ENCODE measurements at regions of chr20 and their contacts with region 1.

Region 1: DNA sequence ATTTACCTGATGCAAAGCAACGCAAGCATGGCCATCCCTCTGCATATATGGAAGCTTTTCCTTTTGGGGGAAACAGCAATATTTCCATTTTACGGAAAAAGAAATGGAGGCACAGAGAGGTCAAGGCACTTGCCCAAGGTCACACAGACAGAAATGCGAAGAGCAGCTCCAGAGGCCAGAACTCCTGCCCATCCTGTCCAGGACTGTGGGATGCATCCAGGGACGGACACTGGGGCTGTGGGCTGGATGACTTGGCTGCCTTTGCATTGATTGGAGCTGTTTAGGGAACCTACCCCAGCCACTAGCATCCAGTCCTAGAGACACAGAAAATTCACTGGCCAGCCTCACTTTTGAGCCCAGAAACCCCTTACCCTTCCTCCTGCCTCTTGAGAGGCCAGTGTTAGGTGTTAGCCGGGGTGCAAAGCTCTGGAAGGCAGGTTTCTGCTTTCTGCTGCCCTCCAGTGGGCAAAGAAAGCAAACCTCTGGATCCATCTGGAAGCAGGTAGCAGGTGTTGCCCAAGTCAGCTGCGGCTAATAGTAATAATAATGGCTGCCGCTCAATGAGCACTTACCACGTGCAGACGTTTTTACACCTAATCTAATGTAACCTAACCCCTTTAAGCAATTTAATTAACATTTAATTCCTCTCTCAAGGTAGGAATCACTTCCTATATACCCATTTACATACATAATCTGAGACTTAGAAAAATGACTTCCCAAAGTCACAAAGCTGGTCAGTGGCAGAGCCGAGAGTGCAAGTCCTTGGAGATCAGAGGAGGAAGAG is 31.7 kb upstream of the CCN5 start:
- DNase-seq: no peak
- ATAC-seq: peak; percentile 87
- H3K4me3 ChIP-seq: no peak overlapping the region
- H3K27ac ChIP-seq: no peak overlapping the region
- H3K4me1 ChIP-seq: no peaks in the 10 kb centered on the region
- H3K27me3 ChIP-seq: no peaks in the 10 kb centered on the region
- CTCF ChIP-seq: peak; percentile 70

Region 2: DNA sequence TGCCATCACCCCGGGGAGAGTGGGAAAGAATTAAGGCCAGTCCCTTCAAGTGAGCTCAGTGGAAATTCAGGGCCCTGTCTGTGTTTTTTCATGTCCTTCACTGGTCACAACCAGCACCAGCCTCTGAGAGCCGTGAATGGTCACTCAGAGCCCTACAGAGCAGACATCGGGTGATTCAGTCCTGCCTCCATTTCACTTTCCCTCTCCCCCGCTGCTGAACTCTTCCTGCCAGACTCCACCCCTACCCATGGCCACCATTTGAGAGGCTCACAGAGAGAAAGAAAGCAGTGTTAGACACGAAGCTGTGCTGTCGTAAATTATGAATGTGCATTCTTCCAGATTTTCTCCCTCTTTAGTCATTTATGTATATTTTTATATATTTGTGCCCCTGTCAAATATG is 341.2 kb before region 1 on chr20:
- intact Hi-C with region 1: no loop called
- DNase-seq: peak; percentile 23
- ATAC-seq: no peak
- H3K4me3 ChIP-seq: no peak overlapping the region
- H3K27ac ChIP-seq: no peak overlapping the region
- H3K4me1 ChIP-seq: no peaks in the 10 kb centered on the region
- H3K27me3 ChIP-seq: peaks cover 9% of the 10 kb centered on the region
- CTCF ChIP-seq: no peak

Region 3: GRCh38 chr20:44733341-44734069 is 50.0 kb after region 1 on chr20:
- intact Hi-C with region 1: loop called (anchors 5 kb)
- DNase-seq: peak; percentile 79
- ATAC-seq: peak; percentile 74
- H3K4me3 ChIP-seq: no peak overlapping the region
- H3K27ac ChIP-seq: no peak overlapping the region
- H3K4me1 ChIP-seq: peaks cover 10% of the 10 kb centered on the region
- H3K27me3 ChIP-seq: no peaks in the 10 kb centered on the region
- CTCF ChIP-seq: peak; percentile 92

Region 4: GRCh38 chr20:44861531-44862006 is 178.1 kb after region 1 on chr20:
- intact Hi-C with region 1: loop called (anchors 10 kb)
- DNase-seq: no peak
- ATAC-seq: peak; percentile 14
- H3K4me3 ChIP-seq: no peak overlapping the region
- H3K27ac ChIP-seq: no peak overlapping the region
- H3K4me1 ChIP-seq: no peaks in the 10 kb centered on the region
- H3K27me3 ChIP-seq: no peaks in the 10 kb centered on the region
- CTCF ChIP-seq: no peak

Measured in upper lobe of right lung (tissue), 1 donor.